Activated CD4-positive, alpha-beta T cell treated with anti-CD3 and anti-CD28 coated beads, Interleukin-2, amount 10 ng/mL, durations not matched to agents 24 days and 14 days (primary cell): ENCODE measurements at regions of chr7 and their contacts with region 1.

Region 1: GRCh38 chr7:21169667-21170580 is 258.0 kb upstream of the SP4 start:
- DNase-seq: no peak
- H3K4me3 Mint-ChIP-seq: no peak overlapping the region
- H3K27ac Mint-ChIP-seq: no peak overlapping the region
- H3K4me1 Mint-ChIP-seq: no peaks in the 10 kb centered on the region
- H3K27me3 Mint-ChIP-seq: peaks cover 48% of the 10 kb centered on the region

Region 2: DNA sequence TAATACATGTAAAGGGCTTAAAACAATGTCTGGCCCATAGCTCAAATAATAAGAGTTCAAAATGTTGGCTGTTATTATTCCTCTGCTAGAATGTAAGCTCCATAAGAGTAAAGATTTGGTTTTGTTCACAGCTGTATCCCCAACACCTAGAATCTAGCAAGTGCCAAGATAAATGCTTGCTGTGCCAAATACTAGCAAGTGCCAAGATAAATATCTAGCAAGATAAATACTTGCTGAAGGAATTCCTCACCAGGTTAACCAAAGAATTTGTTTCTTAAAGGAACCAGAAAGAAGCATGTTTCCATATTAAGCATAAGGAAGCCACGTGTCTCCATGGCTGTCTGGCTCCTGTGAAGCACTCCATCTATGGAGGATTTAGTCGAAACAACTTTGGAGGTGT is 22.7 kb after region 1 on chr7:
- intact Hi-C with region 1: loop called (anchors 1 kb)
- DNase-seq: no peak
- H3K4me3 Mint-ChIP-seq: no peak overlapping the region
- H3K27ac Mint-ChIP-seq: no peak overlapping the region
- H3K4me1 Mint-ChIP-seq: peaks cover 3% of the 10 kb centered on the region
- H3K27me3 Mint-ChIP-seq: no peaks in the 10 kb centered on the region

Region 3: GRCh38 chr7:21953781-21954180 is 783.9 kb after region 1 on chr7:
- intact Hi-C with region 1: no loop called
- DNase-seq: no peak
- H3K4me3 Mint-ChIP-seq: no peak overlapping the region
- H3K27ac Mint-ChIP-seq: no peak overlapping the region
- H3K4me1 Mint-ChIP-seq: peaks cover 4% of the 10 kb centered on the region
- H3K27me3 Mint-ChIP-seq: peaks cover 23% of the 10 kb centered on the region